ENCODE measurements at regions of chr3 and their contacts with region 1.

Region 1: DNA sequence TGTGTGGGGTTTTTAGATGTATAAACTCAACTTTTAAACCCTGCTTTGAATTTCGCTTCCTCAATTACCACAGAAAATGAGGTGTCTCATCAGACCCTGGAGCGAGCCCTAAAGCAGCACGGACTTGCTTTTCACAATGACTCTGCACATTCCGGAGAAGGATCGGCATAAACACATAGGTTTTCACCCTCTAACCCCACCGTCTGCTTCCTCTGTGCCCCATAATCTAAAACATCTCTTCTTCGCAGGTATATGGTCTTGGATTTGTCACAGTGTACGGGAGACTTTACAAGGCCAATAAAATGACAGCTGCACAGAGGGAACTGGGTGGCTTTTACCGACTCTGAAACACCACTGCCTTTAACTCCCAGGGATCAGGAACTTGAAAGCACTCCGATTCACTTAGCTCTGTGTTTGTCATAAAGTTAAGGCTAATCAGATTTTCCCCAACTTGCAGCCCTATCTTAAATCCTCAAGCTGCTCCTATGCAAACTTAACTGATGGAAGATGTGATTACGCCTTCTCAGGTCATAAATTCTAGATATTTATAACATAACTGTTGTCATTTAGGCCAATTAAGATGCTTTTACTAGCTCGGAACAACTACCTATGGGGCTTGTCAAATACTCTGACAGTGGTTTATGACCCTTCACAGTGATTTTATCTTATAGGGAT is 133.4 kb upstream of the WNT5A start:
- DNase-seq: peak; percentile 41
- H3K4me3 ChIP-seq: no peak overlapping the region
- H3K27ac ChIP-seq: no peak overlapping the region
- H3K4me1 ChIP-seq: peaks cover 31% of the 10 kb centered on the region
- H3K27me3 ChIP-seq: no peaks in the 10 kb centered on the region
- CTCF ChIP-seq: no peak

Region 2: GRCh38 chr3:54853573-54854404 is 766.7 kb before region 1 on chr3:
- CTCF ChIA-PET with region 1: no interaction called
- dilution Hi-C with region 1: no loop called
- in situ Hi-C with region 1: no loop called
- intact Hi-C with region 1: loop called (anchors 1 kb)
- DNase-seq: no peak
- H3K4me3 ChIP-seq: no peak overlapping the region
- H3K27ac ChIP-seq: no peak overlapping the region
- H3K4me1 ChIP-seq: peaks cover 15% of the 10 kb centered on the region
- H3K27me3 ChIP-seq: peaks cover 5% of the 10 kb centered on the region
- CTCF ChIP-seq: peak; percentile 77 to 82

Region 3: DNA sequence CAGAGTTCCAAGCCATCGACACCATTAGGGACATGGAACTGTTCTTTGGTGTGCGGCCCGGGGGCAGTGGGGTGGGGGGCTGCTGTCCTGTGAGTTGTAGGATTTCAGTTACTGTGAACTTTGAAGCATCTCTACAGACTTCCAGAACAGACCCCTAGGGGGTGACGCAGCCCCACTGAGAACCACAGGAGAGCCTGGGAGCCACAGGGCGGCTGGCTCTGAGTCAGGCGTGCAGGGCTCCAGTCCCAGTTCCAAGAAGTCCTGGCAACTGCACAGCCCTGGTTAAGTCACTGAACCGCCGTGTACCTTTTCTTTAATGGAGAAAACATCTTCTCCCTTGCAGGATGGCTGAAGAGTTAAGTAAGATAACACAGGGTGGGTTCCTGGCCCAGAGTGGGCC is 669.1 kb before region 1 on chr3:
- CTCF ChIA-PET with region 1: no interaction called
- dilution Hi-C with region 1: no loop called
- in situ Hi-C with region 1: no loop called
- intact Hi-C with region 1: loop called (anchors 5 kb)
- DNase-seq: peak; percentile 17
- H3K4me3 ChIP-seq: no peak overlapping the region
- H3K27ac ChIP-seq: no peak overlapping the region
- H3K4me1 ChIP-seq: peaks cover 9% of the 10 kb centered on the region
- H3K27me3 ChIP-seq: no peaks in the 10 kb centered on the region
- CTCF ChIP-seq: peak in 1 of 2 donors; percentile 43

Region 4: DNA sequence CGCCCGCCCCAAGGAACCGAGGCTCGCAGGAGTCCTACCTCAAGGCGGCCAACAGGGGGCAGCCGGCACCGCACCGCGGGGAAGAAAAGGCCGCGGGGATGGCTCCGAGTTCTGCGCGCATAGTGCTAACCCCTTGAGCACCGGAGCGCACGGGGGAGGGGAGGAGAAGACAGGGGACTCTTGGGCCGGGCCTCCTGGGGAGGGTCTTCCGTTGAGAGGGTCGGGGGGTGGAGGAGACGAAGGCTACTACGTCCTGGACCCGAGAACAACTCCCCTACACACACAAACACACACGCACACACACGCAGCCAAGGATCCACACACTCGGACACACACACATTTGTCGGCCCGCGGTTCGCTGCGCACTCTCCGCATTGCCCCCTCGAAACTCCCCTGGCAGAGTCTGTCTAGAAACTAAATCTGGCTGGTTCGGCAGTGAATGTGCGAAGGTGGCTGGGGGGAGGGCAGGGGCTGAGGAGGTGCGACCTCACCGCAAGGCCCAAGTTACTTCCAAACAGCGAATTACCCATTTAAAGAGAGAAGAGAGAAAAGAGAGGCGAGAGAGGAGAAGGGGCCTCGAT is 135.2 kb before region 1 on chr3:
- CTCF ChIA-PET with region 1: no interaction called
- dilution Hi-C with region 1: no loop called
- in situ Hi-C with region 1: loop called (anchors 10 to 25 kb)
- intact Hi-C with region 1: loop called (anchors 1 kb)
- DNase-seq: peak; percentile 62
- H3K4me3 ChIP-seq: peak overlapping the region; percentile 55 to 86 (median 80)
- H3K27ac ChIP-seq: peak overlapping the region; percentile 23
- H3K4me1 ChIP-seq: peaks cover 38% of the 10 kb centered on the region
- H3K27me3 ChIP-seq: no peaks in the 10 kb centered on the region
- CTCF ChIP-seq: peak; percentile 48 to 73

Region 5: GRCh38 chr3:55721716-55722484 is 101.4 kb after region 1 on chr3:
- CTCF ChIA-PET with region 1: no interaction called
- dilution Hi-C with region 1: no loop called
- in situ Hi-C with region 1: loop called (anchors 10 kb)
- intact Hi-C with region 1: loop called (anchors 1 kb)
- DNase-seq: peak; percentile 27
- H3K4me3 ChIP-seq: no peak overlapping the region
- H3K27ac ChIP-seq: no peak overlapping the region
- H3K4me1 ChIP-seq: no peaks in the 10 kb centered on the region
- H3K27me3 ChIP-seq: peaks cover 4% of the 10 kb centered on the region
- CTCF ChIP-seq: peak; percentile 73 to 76

Region 6: GRCh38 chr3:55897573-55898224 is 277.2 kb after region 1 on chr3:
- CTCF ChIA-PET with region 1: interaction called, 4 read pairs
- dilution Hi-C with region 1: no loop called
- in situ Hi-C with region 1: loop called in 1 of 2 experiments (anchors 25 kb)
- intact Hi-C with region 1: loop called (anchors 1 kb)
- DNase-seq: peak; percentile 45
- H3K4me3 ChIP-seq: no peak overlapping the region
- H3K27ac ChIP-seq: no peak overlapping the region
- H3K4me1 ChIP-seq: no peaks in the 10 kb centered on the region
- H3K27me3 ChIP-seq: no peaks in the 10 kb centered on the region
- CTCF ChIP-seq: peak; percentile 48 to 84

Region 7: GRCh38 chr3:56251343-56251945 is 631.0 kb after region 1 on chr3:
- CTCF ChIA-PET with region 1: no interaction called
- dilution Hi-C with region 1: no loop called
- in situ Hi-C with region 1: no loop called
- intact Hi-C with region 1: loop called (anchors 5 kb)
- DNase-seq: peak; percentile 31
- H3K4me3 ChIP-seq: no peak overlapping the region
- H3K27ac ChIP-seq: no peak overlapping the region
- H3K4me1 ChIP-seq: no peaks in the 10 kb centered on the region
- H3K27me3 ChIP-seq: peaks cover 3% of the 10 kb centered on the region
- CTCF ChIP-seq: peak; percentile 71 to 77